ENCODE measurements at regions of chr6 and their contacts with region 1.

Region 1: DNA sequence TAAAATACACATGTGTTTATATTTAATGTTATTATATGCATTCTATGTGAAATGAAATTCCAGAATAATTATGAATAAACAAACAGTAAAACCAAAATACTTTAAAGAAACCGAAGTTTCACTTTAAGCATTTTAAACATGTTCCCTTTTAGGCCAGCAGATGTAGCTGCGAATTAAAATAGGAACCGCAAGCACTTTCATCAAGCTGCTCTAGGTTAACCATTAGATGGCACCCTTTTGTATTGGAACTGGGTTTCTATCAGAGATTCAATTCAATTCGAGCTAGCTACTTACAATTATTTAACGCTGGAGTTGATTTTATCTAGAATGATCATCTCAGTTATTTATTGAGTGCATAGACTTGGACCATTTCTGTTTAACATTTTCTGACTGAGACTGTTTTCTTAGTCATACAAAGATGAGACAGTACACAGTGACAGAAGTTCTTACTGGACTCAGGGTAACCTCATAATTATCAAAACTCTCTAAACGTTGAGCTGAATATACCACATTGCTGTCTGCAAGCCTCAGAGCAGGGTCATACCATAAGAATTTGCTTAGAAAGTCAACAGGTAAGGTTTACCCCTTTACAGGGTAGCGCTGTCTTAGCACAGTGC is 8.5 kb downstream of the TMEM242 start:
- DNase-seq: no peak
- H3K4me3 ChIP-seq: no peak overlapping the region
- H3K27ac ChIP-seq: peak overlapping the region in 1 of 8 donors; percentile 9
- H3K4me1 ChIP-seq: peaks cover 0 to 36% (median 12%) of the 10 kb centered on the region in 6 donors
- H3K27me3 ChIP-seq: no peaks in the 10 kb centered on the region
- CTCF ChIP-seq: peak; percentile 41 to 89 (median 77)
- POLR2A ChIP-seq: no peak

Region 2: DNA sequence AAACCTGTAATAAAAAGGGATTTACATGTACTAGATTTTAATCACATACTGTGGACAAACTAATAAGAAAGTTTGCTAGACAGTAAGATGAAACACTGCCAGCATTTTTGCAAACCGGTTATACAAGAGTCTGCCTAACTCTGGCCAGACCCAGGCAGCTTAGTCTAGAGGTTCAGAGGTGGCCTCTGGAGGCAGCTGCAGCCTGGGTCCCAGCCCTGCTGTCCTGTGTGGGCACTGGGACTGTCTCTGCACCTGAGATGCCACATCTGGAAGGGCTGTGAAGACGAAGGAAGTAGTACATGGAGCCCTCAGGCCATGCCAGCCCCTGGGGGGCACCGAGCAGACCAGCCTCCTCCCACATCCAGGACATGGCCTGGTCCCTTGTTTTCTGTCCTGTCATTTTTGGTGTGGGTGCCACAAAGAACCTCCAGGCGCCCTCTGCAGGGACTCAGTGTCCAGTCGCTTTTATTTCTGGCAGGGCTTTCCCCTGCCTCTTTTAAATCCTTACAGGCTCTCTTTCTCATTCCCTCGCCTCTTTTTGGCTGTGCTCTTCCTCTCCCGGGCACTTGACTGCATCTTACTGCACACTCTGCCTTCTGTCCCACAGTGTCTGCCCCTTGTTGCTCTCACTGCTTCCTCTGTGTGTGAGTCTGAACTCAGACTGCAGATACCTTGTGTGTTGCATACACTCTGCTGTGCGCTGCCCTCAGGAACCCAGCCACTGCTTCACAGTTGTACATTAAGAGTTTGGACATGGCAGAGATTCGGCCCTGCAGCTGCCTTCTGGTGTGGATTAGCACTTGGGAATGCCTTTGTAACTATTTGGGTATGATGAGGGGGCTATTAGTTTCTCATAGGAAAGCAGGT is 282.9 kb after region 1 on chr6:
- intact Hi-C with region 1: loop called (anchors 10 kb)
- DNase-seq: peak; percentile 78
- H3K4me3 ChIP-seq: no peak overlapping the region
- H3K27ac ChIP-seq: no peak overlapping the region
- H3K4me1 ChIP-seq: peaks cover 0 to 25% (median 10%) of the 10 kb centered on the region in 6 donors
- H3K27me3 ChIP-seq: no peaks in the 10 kb centered on the region
- CTCF ChIP-seq: peak in 9 of 11 experiments; percentile 20 to 73 (median 57)
- POLR2A ChIP-seq: no peak

Region 3: DNA sequence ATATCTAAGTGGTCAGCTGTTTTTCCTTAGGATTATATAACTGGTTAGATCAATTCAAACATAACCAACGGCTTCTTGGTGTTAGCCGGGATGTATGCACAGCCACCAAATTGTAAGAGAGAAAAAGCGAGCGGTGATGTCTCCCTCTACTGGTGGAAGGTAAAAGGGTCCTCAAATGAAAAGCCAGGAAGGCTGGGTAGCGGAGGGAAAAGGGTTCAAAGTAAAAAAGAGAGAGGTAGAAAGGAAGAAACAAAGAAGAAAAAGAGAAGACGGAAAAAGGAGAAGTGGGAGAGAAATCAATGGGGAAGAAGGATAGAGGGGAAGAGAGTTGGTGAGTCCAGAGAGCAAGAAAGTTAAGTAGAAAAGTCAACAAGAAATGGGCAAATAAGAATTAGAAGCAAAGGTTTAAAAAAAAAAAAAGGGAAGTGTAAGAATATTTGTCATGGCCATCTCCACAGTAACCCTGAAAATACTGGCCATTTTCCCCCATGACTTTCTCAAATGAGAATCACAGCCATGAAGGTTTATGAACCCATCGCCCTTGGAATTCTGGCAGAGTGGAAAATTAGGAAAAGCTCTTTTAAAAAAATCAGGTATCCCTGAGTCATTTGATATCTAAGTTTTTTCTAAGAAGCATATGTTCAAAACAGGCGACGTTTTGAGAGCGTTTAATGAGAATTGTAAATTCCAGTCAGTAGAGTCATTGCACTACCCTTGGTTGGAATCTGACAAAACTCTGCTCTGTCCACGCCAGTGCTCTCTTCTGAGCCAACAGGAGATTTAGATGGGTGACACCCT is 352.6 kb after region 1 on chr6:
- intact Hi-C with region 1: loop called (anchors 5 kb)
- DNase-seq: peak; percentile 50
- H3K4me3 ChIP-seq: no peak overlapping the region
- H3K27ac ChIP-seq: no peak overlapping the region
- H3K4me1 ChIP-seq: peaks cover 9 to 39% (median 19%) of the 10 kb centered on the region in 6 donors
- H3K27me3 ChIP-seq: no peaks in the 10 kb centered on the region
- CTCF ChIP-seq: peak; percentile 64 to 93 (median 84)
- POLR2A ChIP-seq: no peak

Measured in spleen (tissue), 13 donors.